ENCODE measurements at regions of chr11 and their contacts with region 1.

Region 1: GRCh38 chr11:129639300-129639699 is 176.3 kb upstream of the TMEM45B start:
- DNase-seq: peak; percentile 94
- H3K4me3 ChIP-seq: no peak overlapping the region
- H3K27ac ChIP-seq: peak overlapping the region; percentile 87
- H3K4me1 ChIP-seq: peaks cover 30% of the 10 kb centered on the region
- H3K27me3 ChIP-seq: no peaks in the 10 kb centered on the region
- CTCF ChIP-seq: no peak
- POLR2A ChIP-seq: no peak

Region 2: GRCh38 chr11:129143335-129143734 is 496.0 kb before region 1 on chr11:
- CTCF ChIA-PET with region 1: no interaction called
- POLR2A ChIA-PET with region 1: no interaction called
- dilution Hi-C with region 1: no loop called
- intact Hi-C with region 1: loop called (anchors 2 kb)
- DNase-seq: peak; percentile 97
- H3K4me3 ChIP-seq: peak overlapping the region in 1 of 3 experiments; percentile 23
- H3K27ac ChIP-seq: peak overlapping the region; percentile 93
- H3K4me1 ChIP-seq: peaks cover 14% of the 10 kb centered on the region
- H3K27me3 ChIP-seq: no peaks in the 10 kb centered on the region
- CTCF ChIP-seq: no peak
- POLR2A ChIP-seq: no peak